ENCODE measurements at regions of chr7 and their contacts with region 1.

Region 1: DNA sequence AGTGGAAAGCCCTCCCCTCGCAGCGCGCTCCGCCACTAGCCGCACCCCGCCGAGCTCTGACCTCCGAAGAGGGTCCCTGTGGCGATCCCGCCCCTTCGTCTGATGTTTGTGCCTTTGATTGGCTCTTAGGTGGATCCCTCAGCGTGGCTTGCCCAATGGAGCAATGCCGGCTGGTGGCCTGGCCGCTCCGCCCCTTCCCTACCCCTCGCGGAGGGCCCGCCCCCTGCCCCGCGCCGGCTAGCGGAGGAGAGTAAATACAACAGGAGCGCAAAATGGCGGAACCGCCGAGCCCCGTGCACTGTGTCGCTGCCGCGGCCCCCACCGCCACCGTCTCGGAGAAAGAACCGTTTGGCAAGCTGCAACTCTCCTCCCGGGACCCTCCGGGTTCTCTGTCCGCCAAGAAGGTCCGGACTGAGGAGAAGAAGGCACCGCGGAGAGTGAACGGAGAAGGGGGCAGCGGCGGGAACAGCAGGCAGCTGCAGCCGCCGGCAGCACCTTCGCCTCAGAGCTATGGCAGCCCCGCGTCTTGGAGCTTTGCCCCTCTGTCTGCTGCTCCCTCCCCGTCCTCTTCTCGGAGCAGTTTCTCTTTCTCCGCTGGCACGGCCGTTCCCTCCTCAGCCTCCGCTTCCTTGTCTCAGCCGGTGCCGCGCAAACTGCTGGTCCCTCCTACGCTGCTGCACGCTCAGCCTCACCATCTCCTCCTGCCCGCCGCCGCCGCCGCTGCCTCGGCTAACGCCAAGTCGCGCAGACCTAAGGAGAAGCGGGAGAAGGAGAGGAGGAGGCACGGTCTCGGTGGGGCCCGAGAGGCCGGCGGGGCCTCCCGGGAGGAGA is at the start of gene RSBN1L:
- DNase-seq: peak; percentile 96 to 99 (median 98)
- ATAC-seq: peak; percentile 93
- H3K4me3 ChIP-seq: peak within 1 kb of the TSS; percentile 98 to 99
- H3K4me3 Mint-ChIP-seq: peak within 1 kb of the TSS; percentile 99
- H3K27ac ChIP-seq: peak within 1 kb of the TSS; percentile 93 to 94
- H3K27ac Mint-ChIP-seq: peak within 1 kb of the TSS; percentile 98
- H3K4me1 ChIP-seq: peaks cover 27% of the 10 kb centered on the region
- H3K4me1 Mint-ChIP-seq: peaks cover 68% of the 10 kb centered on the region
- H3K27me3 ChIP-seq: no peaks in the 10 kb centered on the region
- H3K27me3 Mint-ChIP-seq: no peaks in the 10 kb centered on the region
- CTCF ChIP-seq: peak; percentile 34
- total RNA-seq, gene RSBN1L: 7.4 to 10.0 TPM

Region 2: GRCh38 chr7:77351539-77352004 is 344.8 kb before region 1 on chr7:
- CTCF ChIA-PET with region 1: no interaction called
- POLR2A ChIA-PET with region 1: no interaction called
- intact Hi-C with region 1: loop called in 1 of 2 experiments (anchors 5 kb)
- DNase-seq: peak; percentile 8 to 92 (median 59)
- ATAC-seq: peak; percentile 73
- H3K4me3 ChIP-seq: peak overlapping the region in 1 of 2 experiments; percentile 22
- H3K4me3 Mint-ChIP-seq: peak overlapping the region; percentile 77
- H3K27ac ChIP-seq: peak overlapping the region; percentile 25 to 61
- H3K27ac Mint-ChIP-seq: peak overlapping the region; percentile 93
- H3K4me1 ChIP-seq: peaks cover 65% of the 10 kb centered on the region
- H3K4me1 Mint-ChIP-seq: peaks cover 79% of the 10 kb centered on the region
- H3K27me3 ChIP-seq: no peaks in the 10 kb centered on the region
- H3K27me3 Mint-ChIP-seq: no peaks in the 10 kb centered on the region
- CTCF ChIP-seq: no peak

Region 3: GRCh38 chr7:77415823-77416622 is 280.4 kb before region 1 on chr7 and contains the start of gene GSAP:
- CTCF ChIA-PET with region 1: no interaction called
- POLR2A ChIA-PET with region 1: no interaction called
- intact Hi-C with region 1: loop called in 1 of 2 experiments (anchors 10 kb)
- DNase-seq: peak in 8 of 9 experiments; percentile 28 to 78 (median 57)
- ATAC-seq: peak; percentile 66
- H3K4me3 ChIP-seq: peak within 1 kb of the TSS; percentile 76 to 77
- H3K4me3 Mint-ChIP-seq: peak within 1 kb of the TSS; percentile 83
- H3K27ac ChIP-seq: peak within 1 kb of the TSS; percentile 58 to 74
- H3K27ac Mint-ChIP-seq: peak within 1 kb of the TSS; percentile 72
- H3K4me1 ChIP-seq: peaks cover 30% of the 10 kb centered on the region
- H3K4me1 Mint-ChIP-seq: peaks cover 39% of the 10 kb centered on the region
- H3K27me3 ChIP-seq: no peaks in the 10 kb centered on the region
- H3K27me3 Mint-ChIP-seq: no peaks in the 10 kb centered on the region
- CTCF ChIP-seq: no peak
- total RNA-seq, gene GSAP: 11.9 to 12.8 TPM

Region 4: GRCh38 chr7:77570330-77571011 is 125.9 kb before region 1 on chr7:
- CTCF ChIA-PET with region 1: no interaction called
- POLR2A ChIA-PET with region 1: no interaction called
- intact Hi-C with region 1: no loop called
- DNase-seq: peak in 1 of 9 experiments; percentile 24
- ATAC-seq: no peak
- H3K4me3 ChIP-seq: no peak overlapping the region
- H3K4me3 Mint-ChIP-seq: no peak overlapping the region
- H3K27ac ChIP-seq: no peak overlapping the region
- H3K27ac Mint-ChIP-seq: no peak overlapping the region
- H3K4me1 ChIP-seq: no peaks in the 10 kb centered on the region
- H3K4me1 Mint-ChIP-seq: peaks cover 6% of the 10 kb centered on the region
- H3K27me3 ChIP-seq: no peaks in the 10 kb centered on the region
- H3K27me3 Mint-ChIP-seq: no peaks in the 10 kb centered on the region
- CTCF ChIP-seq: no peak

Region 5: GRCh38 chr7:77734659-77735421 is 38.4 kb after region 1 on chr7:
- CTCF ChIA-PET with region 1: no interaction called
- POLR2A ChIA-PET with region 1: no interaction called
- intact Hi-C with region 1: loop called in 1 of 2 experiments (anchors 5 kb)
- DNase-seq: no peak
- ATAC-seq: no peak
- H3K4me3 ChIP-seq: no peak overlapping the region
- H3K4me3 Mint-ChIP-seq: no peak overlapping the region
- H3K27ac ChIP-seq: no peak overlapping the region
- H3K27ac Mint-ChIP-seq: no peak overlapping the region
- H3K4me1 ChIP-seq: peaks cover 15% of the 10 kb centered on the region
- H3K4me1 Mint-ChIP-seq: peaks cover 47% of the 10 kb centered on the region
- H3K27me3 ChIP-seq: no peaks in the 10 kb centered on the region
- H3K27me3 Mint-ChIP-seq: no peaks in the 10 kb centered on the region
- CTCF ChIP-seq: no peak

Region 6: DNA sequence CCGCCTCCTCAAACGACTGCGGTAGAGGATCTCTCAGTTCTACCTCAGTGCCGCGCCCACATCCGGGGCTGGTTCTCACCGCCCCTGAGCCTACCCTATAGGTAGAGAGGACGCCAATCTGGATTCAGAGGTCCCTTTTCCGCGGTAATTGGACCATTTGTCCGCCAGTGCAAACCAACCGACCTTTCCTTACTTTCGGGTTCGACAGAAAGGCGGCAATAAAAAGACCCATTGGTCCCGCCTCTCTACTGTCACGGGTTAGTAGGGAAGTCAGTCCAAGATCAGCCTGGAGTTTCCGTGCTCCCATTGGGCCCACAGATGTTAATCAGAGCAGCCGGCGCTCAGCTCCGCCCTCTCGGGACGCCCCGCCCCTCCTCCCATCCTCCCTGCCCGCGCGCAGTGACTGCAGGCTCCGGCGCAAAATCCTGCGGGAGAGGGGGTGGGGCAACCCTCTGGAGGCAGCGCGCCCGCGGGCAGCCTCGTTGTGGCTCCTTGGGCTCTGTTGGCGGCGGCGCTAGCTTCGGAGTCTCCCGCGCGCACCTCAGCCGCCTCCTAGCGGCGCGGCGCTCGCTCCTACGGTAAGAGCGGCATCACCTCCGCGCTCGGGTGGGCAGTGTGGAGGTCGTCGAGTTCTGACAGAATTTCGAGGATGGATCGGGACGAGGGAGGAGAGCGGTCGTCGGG is 102.1 kb after region 1 on chr7 and contains the starts of genes PHTF2 and TMEM60:
- CTCF ChIA-PET with region 1: no interaction called
- POLR2A ChIA-PET with region 1: interaction called, 7 read pairs
- intact Hi-C with region 1: loop called (anchors 1 kb)
- DNase-seq: peak; percentile 85 to 98 (median 90)
- ATAC-seq: peak; percentile 88
- H3K4me3 ChIP-seq: peak within 1 kb of the TSS; percentile 70 to 81
- H3K4me3 Mint-ChIP-seq: peak within 1 kb of the TSS; percentile 97
- H3K27ac ChIP-seq: peak within 1 kb of the TSS; percentile 61 to 75
- H3K27ac Mint-ChIP-seq: peak within 1 kb of the TSS; percentile 96
- H3K4me1 ChIP-seq: peaks cover 39% of the 10 kb centered on the region
- H3K4me1 Mint-ChIP-seq: peaks cover 78% of the 10 kb centered on the region
- H3K27me3 ChIP-seq: no peaks in the 10 kb centered on the region
- H3K27me3 Mint-ChIP-seq: no peaks in the 10 kb centered on the region
- CTCF ChIP-seq: peak; percentile 67
- total RNA-seq, gene PHTF2: 10.2 to 14.1 TPM
- total RNA-seq, gene TMEM60: 2.2 TPM

Region 7: DNA sequence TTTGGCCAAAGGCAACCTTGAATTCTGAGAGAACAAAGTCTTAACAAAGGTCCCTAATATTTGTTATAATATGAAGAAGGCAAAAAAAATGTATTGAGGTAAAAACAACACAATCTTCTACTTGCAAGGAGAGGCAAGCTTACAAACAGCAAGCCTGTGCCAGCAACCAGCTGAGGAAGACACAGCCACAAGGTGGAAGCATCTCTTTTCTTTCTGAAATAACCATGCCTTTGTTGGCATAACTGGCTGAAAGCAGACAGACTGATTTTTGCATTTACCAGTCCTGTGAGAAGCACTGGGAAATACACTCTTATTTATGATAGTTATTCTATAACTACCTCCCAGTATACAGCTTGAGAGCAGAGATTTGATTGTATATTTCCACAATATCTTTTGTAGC is 394.2 kb after region 1 on chr7:
- CTCF ChIA-PET with region 1: no interaction called
- POLR2A ChIA-PET with region 1: no interaction called
- intact Hi-C with region 1: no loop called
- DNase-seq: no peak
- ATAC-seq: no peak
- H3K4me3 ChIP-seq: no peak overlapping the region
- H3K4me3 Mint-ChIP-seq: no peak overlapping the region
- H3K27ac ChIP-seq: no peak overlapping the region
- H3K27ac Mint-ChIP-seq: no peak overlapping the region
- H3K4me1 ChIP-seq: no peaks in the 10 kb centered on the region
- H3K4me1 Mint-ChIP-seq: no peaks in the 10 kb centered on the region
- H3K27me3 ChIP-seq: peaks cover 0 to 4% of the 10 kb centered on the region in 2 experiments
- H3K27me3 Mint-ChIP-seq: peaks cover 24% of the 10 kb centered on the region
- CTCF ChIP-seq: no peak